HEK293 (cell line): ENCODE measurements at regions of chr17 and their contacts with region 1.

Region 1: DNA sequence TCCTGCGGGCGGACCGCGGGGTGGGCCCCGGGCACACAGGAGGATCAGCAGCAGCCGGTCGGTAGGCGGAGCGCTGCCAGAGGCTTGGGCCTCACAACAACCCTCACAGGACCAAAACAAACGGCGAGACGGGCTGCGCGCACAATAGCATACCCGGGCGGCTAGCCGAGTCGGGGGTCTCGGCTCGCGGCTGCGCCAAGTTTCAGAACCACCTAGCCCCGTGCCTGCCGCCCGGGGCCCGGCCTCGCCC is 747 bp downstream of the ULK2 start:
- H3K4me3 ChIP-seq: peak overlapping the region; percentile 67
- H3K27ac ChIP-seq: peak overlapping the region; percentile 97
- H3K4me1 ChIP-seq: peaks cover 8% of the 10 kb centered on the region
- CTCF ChIP-seq: peak; percentile 88

Region 2: DNA sequence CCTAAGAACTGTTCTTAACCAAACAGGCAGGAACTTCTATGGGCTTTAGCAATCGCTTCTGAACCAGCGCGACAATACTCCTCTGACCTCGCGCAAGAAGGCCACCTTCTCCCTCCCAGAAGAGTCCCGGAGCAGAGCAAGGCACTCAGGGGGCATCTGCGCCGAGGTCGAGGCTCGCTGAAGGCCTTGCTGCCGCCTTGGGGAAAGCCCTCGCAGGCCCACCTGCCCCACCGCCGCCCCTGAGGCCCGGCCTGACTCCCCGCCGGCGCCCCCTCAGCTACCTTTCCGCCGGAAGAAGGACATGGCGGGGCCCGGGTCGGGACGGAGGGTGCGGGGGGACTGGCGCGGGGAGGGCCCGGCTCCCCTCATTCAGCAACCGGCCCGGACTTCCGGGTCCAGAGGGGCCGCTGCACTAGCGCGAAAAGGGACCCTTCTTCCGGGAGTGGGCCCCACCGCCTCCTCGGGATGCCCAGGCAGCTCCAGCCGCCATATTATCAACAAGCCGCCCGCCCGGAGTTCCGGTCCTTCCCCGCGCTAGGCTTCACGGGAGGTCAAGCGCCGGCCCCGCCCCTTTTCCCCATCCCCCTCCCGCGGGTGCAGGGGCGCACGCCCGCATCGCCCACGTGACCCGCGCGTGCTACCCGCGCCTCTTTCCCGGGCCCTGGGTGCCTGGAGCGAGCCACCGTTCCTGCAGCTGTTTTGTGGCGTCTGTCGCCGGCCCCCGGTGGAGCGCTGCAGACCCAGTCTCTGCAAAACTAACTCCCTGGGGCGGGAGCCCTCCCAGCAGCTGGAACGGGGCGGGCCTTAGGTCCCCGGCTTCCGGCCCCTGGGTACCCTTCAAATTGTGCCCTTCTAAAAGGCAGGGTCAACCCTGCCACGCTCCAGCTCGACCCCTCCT is 110.6 kb after region 1 on chr17 and contains the start of gene AKAP10:
- CTCF ChIA-PET with region 1: no interaction called
- POLR2A ChIA-PET with region 1: interaction called, 12 read pairs
- H3K4me3 ChIP-seq: peak within 1 kb of the TSS; percentile 75
- H3K27ac ChIP-seq: peak within 1 kb of the TSS; percentile 83
- H3K4me1 ChIP-seq: peaks cover 2% of the 10 kb centered on the region; the same call in 1 of the 2 replicates
- CTCF ChIP-seq: no peak; the same call in 1 of the 2 replicates

Region 3: DNA sequence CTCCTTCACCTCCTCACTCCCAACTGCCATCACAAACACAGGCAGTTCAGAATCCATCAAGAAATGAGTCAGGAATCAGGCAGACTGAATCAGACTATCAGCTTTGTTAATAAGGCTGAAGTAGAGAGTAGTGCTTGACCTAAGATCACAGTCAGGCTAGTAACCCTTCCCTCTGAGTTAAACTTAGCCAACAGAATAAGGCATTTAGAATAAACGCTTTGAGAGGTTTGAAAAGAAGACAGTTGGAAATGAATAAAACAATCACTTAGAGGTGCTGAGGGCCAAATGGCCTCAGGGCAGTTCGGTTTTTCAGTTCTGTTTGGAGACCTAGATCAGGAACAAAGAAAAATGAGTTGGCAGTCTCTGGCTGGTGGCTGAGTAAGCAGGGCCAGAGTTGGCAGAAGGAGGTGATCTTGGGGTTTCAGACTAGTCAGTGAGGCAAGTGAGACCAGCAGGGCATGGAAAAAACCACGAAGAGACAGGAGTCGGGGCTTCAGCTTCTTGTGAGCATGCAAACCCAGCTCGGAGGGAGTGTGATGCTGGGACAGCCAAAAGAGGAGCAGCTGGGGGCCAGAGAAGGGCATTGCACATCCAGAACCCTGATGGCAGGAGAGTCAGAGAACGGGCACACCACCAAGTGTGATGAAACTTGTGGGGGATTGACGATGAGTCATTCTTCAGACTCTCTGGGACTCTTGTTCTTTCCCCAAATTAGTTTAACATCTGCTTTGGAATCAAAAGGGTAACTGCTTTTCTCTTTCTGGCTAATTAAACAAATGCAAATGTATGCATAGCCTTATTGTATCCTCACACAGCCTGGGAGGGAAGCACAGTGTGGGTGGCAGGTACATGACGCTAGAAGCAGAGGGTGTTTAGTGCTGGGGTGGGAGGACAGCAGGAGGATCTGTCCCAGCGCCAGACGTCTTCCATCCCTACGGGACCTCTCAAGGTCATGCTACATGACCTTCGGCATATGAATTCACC is 197.0 kb after region 1 on chr17:
- CTCF ChIA-PET with region 1: no interaction called
- POLR2A ChIA-PET with region 1: no interaction called
- H3K4me3 ChIP-seq: no peak overlapping the region
- H3K27ac ChIP-seq: peak overlapping the region; percentile 22; the same call in 1 of the 2 replicates
- H3K4me1 ChIP-seq: peaks cover 15% of the 10 kb centered on the region
- CTCF ChIP-seq: no peak